Panc1 (cell line): ENCODE measurements at regions of chr12 and their contacts with region 1.

Region 1: DNA sequence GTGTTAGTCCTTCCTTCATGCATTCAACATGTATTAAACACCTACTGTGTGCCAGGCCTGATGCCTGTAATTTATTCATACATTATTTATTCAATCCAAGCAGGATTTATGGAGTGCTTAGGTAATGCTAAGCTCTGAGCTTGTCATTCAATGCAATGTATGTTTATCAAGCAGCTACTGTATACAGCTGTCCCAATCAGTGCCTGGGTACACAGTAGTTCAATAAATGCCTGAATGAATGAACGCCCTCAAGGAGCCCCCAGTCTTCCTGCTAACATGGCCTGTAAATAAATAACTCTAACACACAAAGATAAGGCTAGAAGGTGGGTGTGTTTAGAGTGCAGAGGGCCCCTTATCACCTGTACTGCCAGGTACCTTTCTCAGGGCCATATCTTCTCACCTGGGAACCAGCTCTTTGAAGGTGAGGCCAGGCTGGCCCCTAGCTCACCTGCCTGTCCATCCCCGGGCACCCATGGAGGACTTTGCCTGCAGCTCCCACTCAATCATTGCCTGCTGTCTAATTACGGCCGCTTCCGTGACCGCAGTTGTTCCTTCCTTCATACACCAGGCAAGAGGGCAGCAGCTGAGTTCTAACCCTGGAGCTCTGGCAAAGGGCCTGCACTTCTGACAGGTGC is 20.0 kb upstream of the KDM2B start:
- DNase-seq: no peak
- ATAC-seq: no peak
- H3K4me3 ChIP-seq: no peak overlapping the region
- H3K27ac ChIP-seq: no peak overlapping the region
- H3K4me1 ChIP-seq: no peaks in the 10 kb centered on the region
- H3K27me3 ChIP-seq: no peaks in the 10 kb centered on the region
- CTCF ChIP-seq: no peak

Region 2: GRCh38 chr12:121048442-121048841 is 552.4 kb before region 1 on chr12:
- CTCF ChIA-PET with region 1: no interaction called
- POLR2A ChIA-PET with region 1: interaction called, 23 read pairs
- in situ Hi-C with region 1: no loop called
- intact Hi-C with region 1: no loop called
- DNase-seq: no peak
- ATAC-seq: no peak
- H3K4me3 ChIP-seq: no peak overlapping the region
- H3K27ac ChIP-seq: no peak overlapping the region
- H3K4me1 ChIP-seq: no peaks in the 10 kb centered on the region
- H3K27me3 ChIP-seq: no peaks in the 10 kb centered on the region; the same call in 1 of the 2 replicates
- CTCF ChIP-seq: no peak

Region 3: GRCh38 chr12:121334513-121335343 is 266.1 kb before region 1 on chr12:
- CTCF ChIA-PET with region 1: no interaction called
- POLR2A ChIA-PET with region 1: no interaction called
- in situ Hi-C with region 1: no loop called
- intact Hi-C with region 1: no loop called
- DNase-seq: no peak
- ATAC-seq: peak; percentile 95
- H3K4me3 ChIP-seq: no peak overlapping the region
- H3K27ac ChIP-seq: no peak overlapping the region
- H3K4me1 ChIP-seq: no peaks in the 10 kb centered on the region
- H3K27me3 ChIP-seq: no peaks in the 10 kb centered on the region
- CTCF ChIP-seq: peak; percentile 85

Region 4: DNA sequence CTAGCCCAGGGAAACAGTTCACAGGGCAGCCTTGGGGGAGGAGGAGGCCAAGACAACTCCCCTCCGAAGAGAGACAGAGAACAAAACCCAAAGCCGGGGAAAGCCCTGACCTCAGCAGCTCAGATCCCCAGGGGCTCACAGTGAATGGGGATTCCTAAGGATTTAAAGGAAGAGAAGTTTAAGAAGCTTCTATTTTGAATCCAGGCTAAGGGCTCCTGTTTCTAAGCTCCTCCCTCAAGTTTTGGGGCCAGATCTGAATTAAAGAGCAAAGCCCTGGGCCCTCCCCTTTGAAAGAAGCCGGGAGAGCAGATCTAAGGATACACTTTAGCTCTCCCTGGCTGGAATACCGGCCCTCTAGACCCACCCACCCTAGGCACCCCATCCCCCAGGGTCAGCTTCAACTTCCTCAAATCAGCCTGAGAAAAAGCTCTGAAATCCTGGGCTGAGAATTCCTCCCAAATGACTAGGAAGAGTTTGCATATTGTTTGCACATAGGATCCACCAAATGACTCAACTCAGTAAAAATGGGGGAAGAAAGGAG is 23.9 kb before region 1 on chr12:
- CTCF ChIA-PET with region 1: interaction called, 14 read pairs
- POLR2A ChIA-PET with region 1: interaction called, 5 read pairs
- in situ Hi-C with region 1: no loop called
- intact Hi-C with region 1: no loop called
- DNase-seq: no peak
- ATAC-seq: no peak
- H3K4me3 ChIP-seq: no peak overlapping the region
- H3K27ac ChIP-seq: no peak overlapping the region
- H3K4me1 ChIP-seq: peaks cover 17% of the 10 kb centered on the region
- H3K27me3 ChIP-seq: no peaks in the 10 kb centered on the region
- CTCF ChIP-seq: no peak

Region 5: DNA sequence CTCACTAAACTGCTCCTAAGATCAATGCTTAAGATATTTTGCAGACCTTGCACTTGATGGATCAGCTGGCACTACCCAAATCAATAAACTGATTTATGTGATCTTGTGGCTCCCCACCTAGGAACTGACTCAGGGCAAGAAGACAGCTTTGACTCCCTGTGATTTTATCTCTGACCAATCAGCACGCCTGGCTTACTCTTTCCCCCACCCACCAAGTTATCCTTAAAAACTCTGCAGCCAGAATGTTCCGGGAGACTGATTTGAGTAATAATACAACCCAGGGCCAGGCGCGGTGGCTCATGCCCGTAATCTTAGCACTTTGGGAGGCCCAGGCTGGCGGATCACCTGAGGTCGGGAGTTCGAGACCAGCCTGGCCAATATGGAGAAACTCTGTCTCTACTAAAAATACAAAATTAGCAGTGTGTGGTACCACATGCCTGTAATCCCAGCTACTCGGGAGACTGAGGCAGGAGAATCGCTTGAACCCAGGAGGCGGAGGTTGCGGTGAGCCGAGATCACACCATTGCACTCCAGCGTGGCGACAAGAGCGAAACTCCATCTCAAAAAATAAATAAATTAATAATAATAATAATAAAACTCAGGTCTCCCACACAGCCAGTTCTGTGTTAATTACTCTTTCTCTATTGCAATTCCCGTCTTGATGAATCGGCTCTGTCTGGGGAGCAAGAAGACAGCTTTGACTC is 56.6 kb after region 1 on chr12:
- CTCF ChIA-PET with region 1: no interaction called
- POLR2A ChIA-PET with region 1: no interaction called
- in situ Hi-C with region 1: no loop called
- intact Hi-C with region 1: no loop called
- DNase-seq: no peak
- ATAC-seq: no peak
- H3K4me3 ChIP-seq: no peak overlapping the region
- H3K27ac ChIP-seq: no peak overlapping the region
- H3K4me1 ChIP-seq: no peaks in the 10 kb centered on the region
- H3K27me3 ChIP-seq: no peaks in the 10 kb centered on the region
- CTCF ChIP-seq: no peak